ENCODE measurements at regions of chrX and their contacts with region 1.

Region 1: DNA sequence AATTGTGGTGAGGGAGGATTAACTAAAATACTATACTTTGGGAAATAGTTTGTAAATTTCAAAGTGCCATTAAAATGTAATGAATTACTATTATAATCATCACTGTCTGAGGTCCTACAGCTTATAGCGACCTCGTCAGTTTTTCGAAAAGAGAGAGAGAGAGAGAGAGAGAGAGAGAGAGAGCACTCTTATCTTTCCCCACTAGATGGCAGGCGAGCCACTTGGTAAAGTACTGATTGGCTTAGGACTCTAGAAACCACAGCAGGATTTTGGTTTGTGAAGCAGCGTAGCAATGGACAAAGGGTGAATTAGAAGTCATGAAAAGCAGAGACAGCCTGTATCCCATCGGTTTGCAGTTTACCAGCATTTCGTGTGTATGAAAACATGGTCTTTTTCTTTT is 52.5 kb downstream of the LINC00632 start:
- DNase-seq: peak; percentile 46
- H3K4me3 ChIP-seq: no peak overlapping the region
- H3K27ac ChIP-seq: no peak overlapping the region
- H3K4me1 ChIP-seq: peaks cover 3% of the 10 kb centered on the region
- H3K27me3 ChIP-seq: no peaks in the 10 kb centered on the region
- CTCF ChIP-seq: peak; percentile 43 to 69
- POLR2A ChIP-seq: no peak

Region 2: DNA sequence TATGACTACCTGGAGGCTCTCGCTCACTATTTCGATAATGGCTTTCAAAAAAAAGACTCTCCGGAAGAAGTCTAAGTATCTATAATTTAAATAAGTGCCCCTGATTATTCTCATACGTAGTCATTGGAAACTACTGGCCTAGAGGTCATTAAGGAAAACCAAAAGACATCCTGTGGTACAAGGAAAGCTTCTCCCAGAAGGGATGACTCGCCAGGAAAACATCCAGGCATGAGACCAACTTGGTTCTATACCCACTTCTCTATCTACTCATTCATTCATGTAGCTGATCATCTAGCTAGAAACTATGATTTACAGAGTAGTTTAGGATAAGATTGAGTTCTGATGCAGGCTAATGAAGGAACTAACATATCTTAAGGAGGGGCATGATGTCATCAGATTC is 294.9 kb before region 1 on chrX:
- CTCF ChIA-PET with region 1: no interaction called
- POLR2A ChIA-PET with region 1: no interaction called
- dilution Hi-C with region 1: no loop called
- intact Hi-C with region 1: no loop called
- DNase-seq: no peak
- H3K4me3 ChIP-seq: no peak overlapping the region
- H3K27ac ChIP-seq: no peak overlapping the region
- H3K4me1 ChIP-seq: no peaks in the 10 kb centered on the region
- H3K27me3 ChIP-seq: no peaks in the 10 kb centered on the region
- CTCF ChIP-seq: no peak
- POLR2A ChIP-seq: no peak

Region 3: GRCh38 chrX:140918407-140919038 is 156.5 kb after region 1 on chrX:
- CTCF ChIA-PET with region 1: interaction called, 5 read pairs
- POLR2A ChIA-PET with region 1: no interaction called
- dilution Hi-C with region 1: no loop called
- intact Hi-C with region 1: loop called (anchors 5 kb)
- DNase-seq: peak; percentile 57
- H3K4me3 ChIP-seq: no peak overlapping the region
- H3K27ac ChIP-seq: peak overlapping the region; percentile 31
- H3K4me1 ChIP-seq: no peaks in the 10 kb centered on the region
- H3K27me3 ChIP-seq: no peaks in the 10 kb centered on the region
- CTCF ChIP-seq: peak; percentile 46 to 49
- POLR2A ChIP-seq: no peak

Region 4: DNA sequence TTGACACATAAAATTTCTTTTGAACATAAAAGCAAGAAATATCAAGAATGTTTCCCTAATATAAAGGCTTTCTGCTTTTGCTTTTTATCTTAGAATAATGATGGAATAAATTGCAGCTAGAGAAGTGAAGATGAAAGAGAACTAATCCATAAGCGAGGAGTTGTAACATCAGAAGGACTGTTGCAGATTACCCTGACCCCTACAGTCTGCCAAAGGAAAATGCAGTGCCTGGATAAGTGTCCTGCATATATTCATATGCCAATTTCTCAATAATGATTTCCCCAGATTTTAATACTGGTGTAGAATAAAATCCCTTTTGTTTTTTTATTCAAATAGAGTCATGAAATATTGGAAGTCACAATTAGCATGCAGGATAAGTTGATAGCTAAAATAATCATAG is 1327.1 kb after region 1 on chrX:
- CTCF ChIA-PET with region 1: interaction called, 11 read pairs
- POLR2A ChIA-PET with region 1: no interaction called
- dilution Hi-C with region 1: no loop called
- intact Hi-C with region 1: no loop called
- DNase-seq: peak; percentile 1
- H3K4me3 ChIP-seq: no peak overlapping the region
- H3K27ac ChIP-seq: no peak overlapping the region
- H3K4me1 ChIP-seq: no peaks in the 10 kb centered on the region
- H3K27me3 ChIP-seq: no peaks in the 10 kb centered on the region
- CTCF ChIP-seq: peak; percentile 11 to 17
- POLR2A ChIP-seq: no peak